ENCODE measurements at regions of chr1 and their contacts with region 1.

Region 1: GRCh38 chr1:15323351-15323988 is 76.4 kb downstream of the FHAD1 start:
- H3K4me3 ChIP-seq: no peak overlapping the region
- H3K27ac ChIP-seq: no peak overlapping the region
- H3K4me1 ChIP-seq: peaks cover 6% of the 10 kb centered on the region
- CTCF ChIP-seq: peak; percentile 82

Region 2: GRCh38 chr1:15341634-15342407 is 18.4 kb after region 1 on chr1:
- CTCF ChIA-PET with region 1: interaction called, 13 read pairs
- POLR2A ChIA-PET with region 1: no interaction called
- H3K4me3 ChIP-seq: no peak overlapping the region
- H3K27ac ChIP-seq: no peak overlapping the region
- H3K4me1 ChIP-seq: no peaks in the 10 kb centered on the region
- CTCF ChIP-seq: no peak

Region 3: DNA sequence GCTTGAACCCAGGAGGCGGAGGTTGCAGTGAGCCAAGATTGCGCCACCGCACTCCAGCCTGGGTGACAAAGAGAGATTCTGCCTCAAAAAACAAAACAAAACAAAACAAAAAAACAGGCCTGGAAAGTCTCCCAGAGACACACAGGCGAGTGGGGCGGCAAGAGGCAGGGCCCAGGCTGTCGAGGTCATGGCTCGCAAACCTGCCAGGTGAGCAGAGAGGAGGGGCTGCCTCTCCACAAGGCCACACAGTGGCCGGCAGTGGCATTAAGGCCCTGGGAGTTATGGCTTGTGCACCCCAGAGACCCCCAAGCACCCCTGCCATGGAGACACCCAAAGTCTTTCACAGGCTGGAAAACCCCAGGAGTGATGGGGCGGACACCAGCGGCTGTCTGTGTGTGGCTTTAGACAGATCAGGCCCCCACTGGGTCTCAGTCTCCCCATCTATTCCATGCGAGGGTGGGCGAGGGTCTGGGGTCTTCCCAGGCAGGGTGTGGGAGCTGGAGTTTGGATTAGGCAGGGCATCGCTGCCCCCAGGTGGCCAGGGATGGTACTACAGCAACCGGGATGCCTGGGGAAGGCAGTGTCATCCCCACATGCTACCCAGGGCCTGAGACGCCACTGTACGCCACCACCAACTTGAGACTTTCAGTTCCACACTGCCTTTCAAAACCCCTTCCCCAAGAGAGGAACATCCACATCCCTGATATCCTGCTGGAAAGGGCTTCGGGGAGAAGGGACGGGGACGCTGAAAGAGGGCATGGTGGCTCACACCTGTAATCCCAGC is 107.5 kb after region 1 on chr1:
- CTCF ChIA-PET with region 1: interaction called, 145 read pairs
- POLR2A ChIA-PET with region 1: no interaction called
- H3K4me3 ChIP-seq: no peak overlapping the region
- H3K27ac ChIP-seq: no peak overlapping the region
- H3K4me1 ChIP-seq: no peaks in the 10 kb centered on the region
- CTCF ChIP-seq: peak; percentile 84

Region 4: GRCh38 chr1:15501208-15502032 is 177.9 kb after region 1 on chr1:
- CTCF ChIA-PET with region 1: interaction called, 13 read pairs
- POLR2A ChIA-PET with region 1: no interaction called
- H3K4me3 ChIP-seq: no peak overlapping the region
- H3K27ac ChIP-seq: no peak overlapping the region
- H3K4me1 ChIP-seq: no peaks in the 10 kb centered on the region
- CTCF ChIP-seq: peak; percentile 41; the same call in 1 of the 2 replicates

Region 5: GRCh38 chr1:15557594-15557993 is 234.1 kb after region 1 on chr1:
- CTCF ChIA-PET with region 1: no interaction called
- POLR2A ChIA-PET with region 1: no interaction called
- H3K4me3 ChIP-seq: no peak overlapping the region
- H3K27ac ChIP-seq: no peak overlapping the region
- H3K4me1 ChIP-seq: no peaks in the 10 kb centered on the region
- CTCF ChIP-seq: no peak

Measured in HEK293 (cell line).